ENCODE measurements at regions of chr14 and their contacts with region 1.

Region 1: DNA sequence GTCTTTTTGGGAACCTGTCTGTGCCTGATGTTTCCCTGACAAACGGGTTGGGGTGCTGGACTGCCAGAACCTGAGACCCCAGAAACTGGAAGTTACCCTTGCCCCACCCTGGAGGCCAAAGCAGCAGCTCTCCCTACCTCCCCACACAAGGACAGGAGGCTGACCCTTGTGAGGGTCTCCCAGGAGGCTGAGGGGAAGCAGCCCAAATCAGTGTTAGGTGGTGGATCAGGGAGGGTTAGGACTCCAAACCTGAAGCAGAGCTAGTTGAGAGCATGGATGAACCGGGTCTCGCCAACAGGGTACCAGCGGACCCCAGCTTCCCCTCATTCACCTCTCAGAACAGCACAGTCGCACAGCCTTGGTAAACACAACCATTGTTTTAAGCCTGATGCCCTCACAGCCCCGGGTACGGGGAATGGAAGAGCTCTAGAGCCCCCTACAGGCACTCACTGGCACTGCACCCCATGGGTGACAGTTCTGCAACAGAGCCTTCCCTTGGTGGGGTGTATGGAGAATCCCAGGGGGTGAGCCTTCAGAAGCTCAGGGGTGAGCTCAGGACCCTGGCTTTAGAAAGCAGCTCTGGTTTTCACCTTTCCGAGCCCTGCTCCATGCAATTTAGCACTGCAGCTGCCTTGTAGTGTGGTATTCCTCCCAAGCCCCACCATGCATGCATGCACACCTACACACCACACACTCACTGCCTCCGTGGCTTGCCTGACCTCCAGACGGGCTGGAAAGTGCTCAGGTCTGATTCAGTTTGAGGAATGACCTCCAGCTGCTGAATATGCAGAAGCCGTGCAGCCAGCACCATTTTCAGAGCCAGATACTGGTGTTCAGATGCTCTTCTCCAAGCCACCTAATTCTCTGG is 11.2 kb downstream of the ESRRB start:
- DNase-seq: peak; percentile 49
- H3K4me3 Mint-ChIP-seq: no peak overlapping the region
- H3K27ac Mint-ChIP-seq: no peak overlapping the region
- H3K4me1 Mint-ChIP-seq: no peaks in the 10 kb centered on the region
- H3K27me3 Mint-ChIP-seq: peaks cover 18% of the 10 kb centered on the region

Region 2: DNA sequence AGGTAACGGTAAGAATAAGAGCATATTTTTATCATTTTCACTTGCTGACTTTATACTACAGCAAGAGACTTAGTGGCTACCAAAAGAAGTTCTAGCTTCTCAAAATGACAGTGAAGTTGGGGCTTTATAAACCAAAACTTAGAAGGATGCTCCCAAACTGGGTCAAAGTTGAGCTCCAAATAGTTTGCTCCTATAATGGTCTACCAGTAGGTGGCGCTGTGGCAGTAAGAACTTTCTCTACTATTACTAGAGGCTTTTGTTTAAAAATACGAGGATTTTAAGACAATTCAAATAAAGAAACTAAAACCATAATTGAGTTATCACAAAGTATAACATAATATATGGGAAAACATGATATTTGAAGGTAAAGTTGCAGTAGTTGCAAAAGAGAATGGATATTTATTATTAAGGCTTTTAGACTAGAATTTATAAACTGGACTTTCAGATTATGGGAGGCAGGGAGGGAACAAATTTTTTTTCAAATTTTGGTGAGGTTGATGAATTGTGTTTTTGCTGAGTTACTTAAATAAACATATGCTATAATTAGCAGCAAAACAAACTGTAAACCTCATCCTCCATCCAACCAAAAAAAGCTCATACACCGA is 480.4 kb before region 1 on chr14:
- intact Hi-C with region 1: loop called (anchors 1 kb)
- DNase-seq: peak; percentile 40
- H3K4me3 Mint-ChIP-seq: no peak overlapping the region
- H3K27ac Mint-ChIP-seq: no peak overlapping the region
- H3K4me1 Mint-ChIP-seq: no peaks in the 10 kb centered on the region
- H3K27me3 Mint-ChIP-seq: no peaks in the 10 kb centered on the region

Region 3: GRCh38 chr14:76050797-76051392 is 336.3 kb before region 1 on chr14:
- intact Hi-C with region 1: loop called (anchors 1 kb)
- DNase-seq: peak; percentile 24
- H3K4me3 Mint-ChIP-seq: no peak overlapping the region
- H3K27ac Mint-ChIP-seq: no peak overlapping the region
- H3K4me1 Mint-ChIP-seq: no peaks in the 10 kb centered on the region
- H3K27me3 Mint-ChIP-seq: no peaks in the 10 kb centered on the region

Region 4: DNA sequence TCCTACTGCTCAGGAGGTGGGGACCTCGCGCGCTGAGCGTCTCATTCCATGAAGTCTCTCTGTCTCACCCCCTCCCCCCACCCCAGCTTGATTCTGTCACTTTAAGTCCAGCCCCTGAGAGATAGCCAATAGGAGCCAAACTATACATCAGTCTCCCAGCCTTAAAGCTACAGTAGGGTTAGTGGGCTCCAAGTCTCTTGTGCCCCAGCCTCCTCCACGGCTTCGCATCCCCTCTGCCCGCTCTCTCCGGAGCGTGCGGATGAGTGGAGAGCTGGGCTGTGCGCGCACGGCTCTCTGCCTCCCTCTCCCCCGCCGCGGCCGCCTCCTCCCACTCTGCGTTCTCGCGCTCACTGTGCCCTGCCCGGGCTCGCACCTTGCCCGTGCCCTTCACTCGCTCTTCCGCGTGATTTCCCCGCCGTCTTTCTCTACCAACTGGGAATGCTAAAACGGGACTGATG is 11.2 kb before region 1 on chr14 and contains the start of gene ESRRB:
- intact Hi-C with region 1: no loop called
- DNase-seq: no peak
- H3K4me3 Mint-ChIP-seq: no peak within 1 kb of the TSS
- H3K27ac Mint-ChIP-seq: no peak within 1 kb of the TSS
- H3K4me1 Mint-ChIP-seq: no peaks in the 10 kb centered on the region
- H3K27me3 Mint-ChIP-seq: peaks cover 57% of the 10 kb centered on the region
- total RNA-seq, gene ESRRB: 0.17 and 0.21 TPM in 2 replicates